Gastrocnemius medialis (tissue), 4 donors: ENCODE measurements at regions of chr10 and their contacts with region 1.

Region 1: GRCh38 chr10:101938316-101939281 is 95.0 kb upstream of the KCNIP2 start:
- DNase-seq: no peak
- ATAC-seq: no peak
- H3K4me3 ChIP-seq: peak overlapping the region in 1 of 4 donors; percentile 2
- H3K27ac ChIP-seq: peak overlapping the region; percentile 72 to 85 (median 80)
- H3K4me1 ChIP-seq: peaks cover 70 to 73% of the 10 kb centered on the region in 2 donors
- H3K27me3 ChIP-seq: no peaks in the 10 kb centered on the region
- CTCF ChIP-seq: no peak
- POLR2A ChIP-seq: no peak

Region 2: DNA sequence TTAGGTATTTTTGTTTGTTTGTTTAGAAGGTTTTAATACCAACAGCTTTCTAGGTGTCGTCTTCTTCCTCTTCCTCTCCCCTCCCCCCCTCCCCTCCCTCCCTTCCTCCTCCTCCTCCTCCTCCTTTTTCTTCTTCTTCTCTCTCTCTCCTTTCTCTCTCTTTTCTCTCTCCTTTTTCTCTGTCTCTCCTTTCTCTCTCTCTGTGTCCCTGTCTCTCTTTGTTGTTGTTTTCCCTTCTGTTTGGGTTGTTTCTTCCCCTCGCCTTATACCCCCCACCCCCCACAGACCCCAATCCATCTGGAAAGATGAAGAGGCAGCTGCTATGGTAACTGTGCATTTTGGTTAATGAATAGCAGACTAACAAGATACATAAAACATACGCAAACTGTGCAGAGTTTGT is 509.2 kb before region 1 on chr10:
- in situ Hi-C with region 1: no loop called
- intact Hi-C with region 1: no loop called
- DNase-seq: no peak
- ATAC-seq: no peak
- H3K4me3 ChIP-seq: no peak overlapping the region
- H3K27ac ChIP-seq: no peak overlapping the region
- H3K4me1 ChIP-seq: peaks cover 0 to 3% of the 10 kb centered on the region in 2 donors
- H3K27me3 ChIP-seq: no peaks in the 10 kb centered on the region
- CTCF ChIP-seq: no peak
- POLR2A ChIP-seq: no peak

Region 3: DNA sequence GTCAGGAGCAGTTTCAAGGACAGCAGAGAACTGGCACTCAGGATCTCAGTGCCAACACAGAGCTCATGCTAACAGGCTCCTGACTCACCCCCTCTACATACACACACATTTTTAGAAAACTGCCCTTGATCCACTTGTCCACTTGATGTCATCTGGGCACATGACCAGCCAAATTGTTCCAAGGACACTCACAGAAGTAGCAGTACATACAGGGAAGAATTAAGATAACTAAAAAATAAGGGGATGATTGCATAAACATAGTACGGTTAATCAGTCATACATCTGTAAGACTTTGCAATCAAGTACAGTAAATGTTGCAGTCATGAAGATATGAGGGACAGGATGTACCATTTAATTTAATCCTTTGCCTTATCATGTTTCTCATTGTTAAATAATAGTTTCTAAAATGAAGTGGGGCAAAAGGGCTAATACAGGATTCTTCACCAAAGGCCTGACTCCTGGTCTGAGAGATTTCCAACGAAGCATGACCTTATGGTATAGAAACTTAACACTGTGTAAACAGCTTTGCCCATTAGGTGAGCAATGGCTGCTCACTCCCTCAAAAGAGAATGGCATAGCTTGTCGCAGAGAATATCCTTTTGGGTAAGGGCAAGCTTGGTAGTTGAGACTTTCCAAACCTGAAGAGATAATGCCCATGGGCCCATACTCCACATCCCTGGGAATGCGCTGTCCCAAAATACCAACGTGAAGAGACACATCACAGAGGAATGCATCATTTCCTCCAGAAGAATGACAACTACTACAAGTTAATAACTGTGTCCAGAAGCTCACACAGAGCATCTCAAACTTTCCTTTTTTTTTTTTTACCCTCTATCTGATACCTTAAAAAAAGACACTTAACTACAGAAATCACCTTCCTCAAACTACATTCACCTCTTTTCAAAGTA is 23.2 kb after region 1 on chr10:
- in situ Hi-C with region 1: no loop called
- intact Hi-C with region 1: loop called (anchors 1 kb)
- DNase-seq: peak; percentile 82 to 85
- ATAC-seq: peak; percentile 93 to 96
- H3K4me3 ChIP-seq: no peak overlapping the region
- H3K27ac ChIP-seq: peak overlapping the region; percentile 89 to 98 (median 93)
- H3K4me1 ChIP-seq: peaks cover 35 to 45% of the 10 kb centered on the region in 2 donors
- H3K27me3 ChIP-seq: no peaks in the 10 kb centered on the region
- CTCF ChIP-seq: peak in 1 of 5 experiments; percentile 20
- POLR2A ChIP-seq: no peak